ENCODE measurements at regions of chr11 and their contacts with region 1.

Region 1: DNA sequence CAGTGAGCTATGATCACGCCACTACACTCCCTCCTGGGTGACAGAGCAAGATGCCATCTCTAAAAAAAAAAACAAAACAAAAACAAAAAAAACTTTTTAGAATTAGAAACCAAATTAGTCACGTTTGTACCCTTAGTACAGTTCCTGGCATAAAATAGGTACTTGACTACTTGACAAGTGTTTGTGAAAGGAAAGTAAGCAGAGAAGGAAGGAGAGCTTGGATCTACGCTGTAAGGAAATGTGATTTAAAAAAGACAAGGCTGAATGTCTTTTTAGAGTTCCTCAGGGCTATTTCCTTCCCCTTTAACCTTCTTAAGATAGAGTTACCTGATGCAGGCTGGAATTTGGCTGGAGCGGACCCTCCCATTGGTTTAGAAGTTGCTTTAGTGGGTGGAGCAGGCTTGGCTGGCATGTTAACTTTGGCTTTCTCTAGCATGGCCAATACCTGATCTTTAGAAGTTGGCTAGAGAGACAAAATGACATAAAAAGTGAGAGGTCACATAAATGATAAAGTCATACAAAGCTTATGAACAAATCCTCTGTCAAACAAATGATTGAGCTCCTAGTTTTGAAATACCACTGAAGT is 50.7 kb downstream of the F2 start:
- DNase-seq: no peak
- H3K4me3 ChIP-seq: no peak overlapping the region
- H3K27ac ChIP-seq: no peak overlapping the region
- H3K4me1 ChIP-seq: no peaks in the 10 kb centered on the region
- H3K27me3 ChIP-seq: no peaks in the 10 kb centered on the region
- CTCF ChIP-seq: no peak

Region 2: GRCh38 chr11:46039990-46040389 is 729.7 kb before region 1 on chr11:
- CTCF ChIA-PET with region 1: no interaction called
- POLR2A ChIA-PET with region 1: interaction called, 23 read pairs
- intact Hi-C with region 1: no loop called
- DNase-seq: no peak
- H3K4me3 ChIP-seq: no peak overlapping the region
- H3K27ac ChIP-seq: no peak overlapping the region
- H3K4me1 ChIP-seq: no peaks in the 10 kb centered on the region
- H3K27me3 ChIP-seq: no peaks in the 10 kb centered on the region
- CTCF ChIP-seq: no peak

Region 3: DNA sequence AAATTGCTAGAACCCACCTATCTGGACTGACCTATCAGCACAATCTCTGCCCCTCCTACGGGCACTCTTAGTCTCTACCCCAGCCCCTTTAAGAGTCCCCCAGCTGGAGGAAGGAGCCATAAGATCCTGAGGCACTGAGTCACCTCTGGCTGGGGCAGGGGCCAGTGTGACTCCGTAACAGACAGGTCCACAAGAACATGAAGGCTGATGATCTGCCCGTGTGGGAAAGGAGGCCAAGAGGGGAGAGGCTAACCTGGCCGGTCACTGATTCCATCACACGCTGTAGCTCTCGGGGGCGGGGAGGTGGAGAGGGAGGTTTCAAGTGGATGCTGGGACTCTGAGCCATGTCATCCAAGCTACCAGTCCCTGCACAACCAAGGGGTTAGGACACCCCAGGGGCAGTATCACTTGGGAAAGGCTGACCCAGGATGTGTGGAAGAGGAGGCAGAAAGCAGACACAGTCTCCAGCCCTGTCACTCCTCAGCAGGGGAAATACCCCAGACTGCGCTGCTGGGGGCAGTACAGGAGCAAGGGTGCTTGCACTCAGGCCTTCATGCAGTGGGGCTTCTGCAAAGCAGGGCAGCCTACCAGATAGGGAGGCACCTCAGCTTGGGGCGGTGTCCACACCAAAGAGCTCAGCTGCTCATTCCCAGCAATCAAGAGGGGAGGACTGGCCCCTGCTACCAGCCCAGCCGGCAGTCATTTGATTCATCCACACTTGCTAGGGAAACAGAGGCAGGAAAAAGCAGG is 91.6 kb before region 1 on chr11:
- CTCF ChIA-PET with region 1: no interaction called
- POLR2A ChIA-PET with region 1: no interaction called
- intact Hi-C with region 1: no loop called
- DNase-seq: no peak
- H3K4me3 ChIP-seq: no peak overlapping the region
- H3K27ac ChIP-seq: no peak overlapping the region
- H3K4me1 ChIP-seq: no peaks in the 10 kb centered on the region
- H3K27me3 ChIP-seq: no peaks in the 10 kb centered on the region
- CTCF ChIP-seq: peak; percentile 21; the same call in 1 of the 2 replicates

Region 4: DNA sequence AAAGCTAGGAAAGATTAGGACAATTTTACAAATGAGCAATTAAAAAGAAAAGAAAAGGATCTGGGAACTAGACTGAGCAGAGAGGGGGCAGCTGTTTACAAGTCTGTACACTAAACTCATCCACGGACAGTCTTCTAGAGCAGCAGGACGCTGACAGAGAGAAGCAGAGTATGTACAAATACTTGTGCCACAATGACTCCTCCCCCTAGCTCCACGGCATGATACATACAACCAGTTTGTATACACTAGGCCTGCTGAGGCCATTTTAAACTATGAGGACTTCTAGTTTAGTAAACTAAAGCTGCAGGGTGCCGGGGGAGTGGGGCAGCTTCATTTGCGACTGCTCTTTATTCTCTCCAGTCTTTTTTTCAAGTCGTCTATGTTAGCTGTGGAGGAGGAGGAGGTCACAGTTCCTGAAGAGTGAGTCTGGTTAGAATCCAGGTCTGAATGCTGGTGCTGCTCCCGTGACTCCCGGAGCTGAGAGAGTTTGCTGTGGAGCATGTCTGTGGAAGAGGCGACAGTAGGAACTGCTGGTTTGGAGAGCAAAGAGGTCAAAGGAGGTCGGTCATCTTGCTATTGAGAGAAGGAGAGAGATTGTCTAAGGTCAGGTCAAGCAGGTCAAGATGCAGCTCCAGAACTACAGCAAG is 25.9 kb before region 1 on chr11:
- CTCF ChIA-PET with region 1: no interaction called
- POLR2A ChIA-PET with region 1: no interaction called
- intact Hi-C with region 1: loop called (anchors 1 kb)
- DNase-seq: no peak
- H3K4me3 ChIP-seq: no peak overlapping the region
- H3K27ac ChIP-seq: no peak overlapping the region
- H3K4me1 ChIP-seq: no peaks in the 10 kb centered on the region
- H3K27me3 ChIP-seq: no peaks in the 10 kb centered on the region
- CTCF ChIP-seq: no peak

Region 5: DNA sequence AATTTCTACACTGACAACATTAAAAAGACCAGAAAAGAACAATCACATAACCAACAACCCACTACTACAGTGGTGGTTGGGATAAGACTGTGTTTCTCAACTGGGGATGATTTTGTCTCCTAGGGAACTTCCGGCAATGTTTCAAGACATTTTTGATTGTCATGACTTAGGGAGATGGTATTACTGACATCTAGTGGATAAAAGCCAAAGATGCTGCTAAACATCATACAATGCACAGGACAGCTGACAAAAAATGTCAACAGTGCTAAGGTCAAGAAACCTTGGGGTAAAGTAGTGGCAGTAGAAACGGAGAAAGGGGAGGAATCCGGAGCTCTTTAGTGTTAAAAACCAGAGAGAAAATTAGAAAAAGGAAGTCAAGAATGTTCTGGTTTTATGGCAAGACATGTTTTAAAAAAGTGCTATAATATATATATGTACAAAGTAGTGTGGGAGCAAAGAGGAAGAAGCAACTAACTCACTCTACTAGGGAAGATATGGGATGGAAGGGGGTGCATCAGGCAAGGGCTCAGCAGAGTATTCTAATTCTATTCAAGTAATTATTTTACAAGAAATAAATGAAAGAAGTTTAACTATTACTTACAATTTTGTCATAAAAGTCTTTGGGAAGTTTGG is 39.2 kb after region 1 on chr11:
- CTCF ChIA-PET with region 1: interaction called, 3 read pairs
- POLR2A ChIA-PET with region 1: no interaction called
- intact Hi-C with region 1: loop called (anchors 5 kb)
- DNase-seq: peak; percentile 87
- H3K4me3 ChIP-seq: no peak overlapping the region
- H3K27ac ChIP-seq: no peak overlapping the region
- H3K4me1 ChIP-seq: no peaks in the 10 kb centered on the region
- H3K27me3 ChIP-seq: no peaks in the 10 kb centered on the region
- CTCF ChIP-seq: peak; percentile 82

Region 6: DNA sequence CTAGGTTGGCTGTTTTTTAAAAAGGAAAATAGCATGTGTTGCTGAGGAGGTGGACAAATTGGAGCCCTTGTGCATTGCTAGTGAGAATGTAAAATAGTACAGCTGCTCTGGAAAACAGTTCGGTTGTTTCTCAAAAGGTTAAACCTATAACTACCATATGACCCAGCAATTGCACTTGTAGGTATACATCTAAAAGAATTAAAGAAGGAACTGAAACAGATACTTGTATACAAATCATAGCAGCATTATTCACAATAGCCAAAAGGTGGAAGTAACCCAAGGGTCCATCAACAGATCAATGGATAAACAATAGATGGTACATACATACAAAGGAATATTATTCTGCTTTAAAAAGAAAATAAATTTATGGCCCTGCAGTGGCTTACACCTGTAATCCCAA is 278.2 kb after region 1 on chr11:
- CTCF ChIA-PET with region 1: no interaction called
- POLR2A ChIA-PET with region 1: no interaction called
- intact Hi-C with region 1: no loop called
- DNase-seq: no peak
- H3K4me3 ChIP-seq: no peak overlapping the region
- H3K27ac ChIP-seq: no peak overlapping the region
- H3K4me1 ChIP-seq: no peaks in the 10 kb centered on the region
- H3K27me3 ChIP-seq: no peaks in the 10 kb centered on the region
- CTCF ChIP-seq: no peak